KBM-7 (cell line): ENCODE measurements at regions of chr22 and their contacts with region 1.

Region 1: GRCh38 chr22:49724893-49725474 is 102.7 kb downstream of the BRD1 start:
- DNase-seq: peak; percentile 80

Region 2: DNA sequence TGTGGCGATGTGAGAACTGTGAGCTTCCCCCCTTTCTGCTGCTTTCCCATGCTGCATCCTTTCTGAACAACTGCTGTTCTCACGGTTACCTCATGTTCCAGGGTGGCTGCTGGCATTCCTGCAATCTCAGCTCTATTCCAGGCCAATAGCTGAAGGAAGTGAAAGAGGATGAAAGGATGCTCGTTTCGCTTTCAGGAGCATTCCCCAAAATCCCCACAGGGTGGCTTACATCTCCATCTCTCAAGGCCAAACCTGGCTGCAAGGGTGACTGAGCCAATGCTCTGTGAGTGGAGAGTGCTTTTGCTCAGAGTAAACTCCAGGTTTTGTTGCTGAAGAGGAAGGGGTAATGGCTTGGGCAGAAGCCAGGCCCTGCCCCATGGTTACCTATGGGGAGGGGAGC is 745.5 kb before region 1 on chr22:
- in situ Hi-C with region 1: loop called (anchors 25 kb)
- DNase-seq: peak; percentile 12

Region 3: DNA sequence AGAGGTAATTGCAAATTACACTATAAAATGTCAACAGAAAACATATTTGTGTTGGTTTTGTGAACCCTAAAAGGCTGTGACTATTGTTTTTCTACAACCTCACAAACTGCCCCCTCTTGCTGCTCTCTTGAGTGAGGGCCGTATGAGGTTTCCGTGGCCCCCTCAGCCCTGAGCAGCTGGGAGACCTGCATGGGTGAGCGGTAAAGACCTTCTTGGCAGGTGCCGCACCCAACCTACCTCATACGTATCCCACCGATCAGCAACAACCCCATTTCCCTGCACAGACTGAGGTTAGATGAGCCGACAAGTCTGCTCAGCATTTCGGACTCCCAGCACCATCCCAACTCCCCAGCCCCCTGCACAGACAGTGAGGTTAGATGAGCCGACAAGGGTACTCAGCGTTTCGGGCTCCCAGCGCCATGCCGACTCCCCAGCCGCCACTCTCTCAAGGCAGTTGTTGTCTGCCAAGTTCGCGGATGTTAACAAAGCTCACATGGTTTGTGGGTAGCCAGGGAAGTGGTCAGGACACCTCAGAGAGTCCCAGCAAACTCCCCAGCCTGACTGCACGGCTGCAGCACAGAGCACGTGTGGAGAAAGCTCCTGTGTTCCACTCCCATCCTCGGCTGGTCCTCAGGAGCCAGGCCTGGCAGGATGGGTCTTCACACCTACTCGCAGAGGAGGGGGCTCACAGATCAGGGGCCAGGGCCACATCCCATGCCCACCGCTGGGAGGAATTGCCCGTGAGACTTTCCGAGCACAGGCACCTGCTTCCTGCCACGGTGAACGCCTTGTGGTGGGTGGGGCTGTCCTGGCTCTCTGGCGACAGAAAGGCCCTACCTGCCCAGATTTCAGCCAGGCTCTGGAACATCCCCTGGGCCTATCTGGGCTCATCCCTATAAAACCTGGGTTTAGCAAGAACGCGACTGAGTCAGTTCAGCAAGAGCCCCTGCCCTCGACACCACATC is 400.2 kb before region 1 on chr22:
- in situ Hi-C with region 1: loop called (anchors 25 kb)
- DNase-seq: no peak